ENCODE measurements at regions of chr6 and their contacts with region 1.

Region 1: GRCh38 chr6:32127717-32128592 is at the start of gene ATF6B:
- DNase-seq: peak; percentile 100
- ATAC-seq: peak; percentile 95 to 96
- H3K4me3 ChIP-seq: peak within 1 kb of the TSS; percentile 91 to 99 (median 96)
- H3K27ac ChIP-seq: peak within 1 kb of the TSS; percentile 89 to 93 (median 92)
- H3K4me1 ChIP-seq: peaks cover 24 to 26% of the 10 kb centered on the region in 2 donors
- H3K27me3 ChIP-seq: no peaks in the 10 kb centered on the region
- CTCF ChIP-seq: no peak
- POLR2A ChIP-seq: peak; percentile 57 to 67
- total RNA-seq, gene ATF6B: 6.8 to 18.4 (median 9.5) TPM

Region 2: GRCh38 chr6:31870385-31870921 is 257.5 kb before region 1 on chr6:
- in situ Hi-C with region 1: no loop called
- intact Hi-C with region 1: no loop called
- DNase-seq: no peak
- ATAC-seq: no peak
- H3K4me3 ChIP-seq: no peak overlapping the region
- H3K27ac ChIP-seq: no peak overlapping the region
- H3K4me1 ChIP-seq: no peaks in the 10 kb centered on the region
- H3K27me3 ChIP-seq: no peaks in the 10 kb centered on the region
- CTCF ChIP-seq: no peak
- POLR2A ChIP-seq: no peak

Region 3: GRCh38 chr6:32153564-32154513 is 25.9 kb after region 1 on chr6 and contains the start of gene PPT2:
- in situ Hi-C with region 1: no loop called
- intact Hi-C with region 1: loop called (anchors 2 kb)
- DNase-seq: peak; percentile 80 to 85
- ATAC-seq: peak; percentile 85 to 86
- H3K4me3 ChIP-seq: peak within 1 kb of the TSS; percentile 77 to 97 (median 84)
- H3K27ac ChIP-seq: peak within 1 kb of the TSS; percentile 77 to 93 (median 87)
- H3K4me1 ChIP-seq: peaks cover 25 to 29% of the 10 kb centered on the region in 2 donors
- H3K27me3 ChIP-seq: peaks cover 7 to 19% (median 8%) of the 10 kb centered on the region in 3 donors
- CTCF ChIP-seq: peak in 2 of 5 experiments; percentile 14 to 15
- POLR2A ChIP-seq: peak; percentile 23 to 38
- total RNA-seq, gene PPT2: 16.2 to 72.7 (median 21.4) TPM

Region 4: DNA sequence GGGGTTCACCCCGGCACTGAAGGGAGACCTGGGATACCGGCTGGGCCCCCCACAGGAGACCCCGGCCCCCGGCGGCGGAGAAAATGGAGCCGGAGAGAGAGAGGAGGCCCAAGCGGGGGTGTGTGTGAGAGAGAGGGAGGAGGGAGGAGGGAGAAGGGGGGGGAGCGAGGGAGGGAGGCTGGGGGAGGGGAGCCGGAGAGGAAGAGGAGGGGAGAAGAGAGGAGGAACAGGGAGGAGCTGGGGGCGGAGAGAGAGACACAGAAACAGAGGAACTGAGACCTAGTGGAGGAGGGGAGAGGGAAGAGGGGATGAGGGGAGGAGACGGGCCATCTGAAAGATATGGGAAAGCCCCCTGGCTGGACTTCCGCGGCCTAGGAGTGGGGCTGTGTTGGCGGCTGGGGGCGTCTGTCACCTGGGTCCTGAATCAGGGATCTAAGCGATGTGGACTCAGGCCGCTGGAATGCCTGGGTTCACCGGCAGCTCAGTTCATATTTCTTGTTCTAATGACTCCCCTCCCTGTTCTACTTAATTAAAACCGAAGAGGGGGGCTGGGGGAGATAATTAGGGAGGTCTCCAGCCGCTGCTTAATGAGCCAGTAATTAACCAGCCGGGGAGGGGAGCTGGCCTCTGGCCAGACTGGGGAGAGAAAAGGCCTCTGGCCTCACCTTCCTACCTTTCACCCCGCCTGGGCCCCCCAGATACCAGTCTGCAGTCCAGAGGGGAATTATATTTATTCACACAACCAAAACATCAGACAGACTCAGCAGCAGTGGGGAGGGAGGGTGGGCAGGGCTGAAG is 62.3 kb after region 1 on chr6 and contains the start of gene PBX2:
- in situ Hi-C with region 1: loop called in 2 of 4 experiments (anchors 5 to 10 kb)
- intact Hi-C with region 1: loop called (anchors 1 kb)
- DNase-seq: peak; percentile 94
- ATAC-seq: peak; percentile 83 to 89
- H3K4me3 ChIP-seq: peak within 1 kb of the TSS; percentile 71 to 87 (median 78)
- H3K27ac ChIP-seq: peak within 1 kb of the TSS; percentile 96 to 99 (median 98)
- H3K4me1 ChIP-seq: peaks cover 37 to 53% of the 10 kb centered on the region in 2 donors
- H3K27me3 ChIP-seq: no peaks in the 10 kb centered on the region
- CTCF ChIP-seq: no peak
- POLR2A ChIP-seq: peak; percentile 72 to 90
- total RNA-seq, gene PBX2: 24.3 to 37.6 (median 33.6) TPM